Activated T-helper 2 cell treated with anti-CD3 and anti-CD28 coated beads, Interferon-gamma antibody, Interleukin-2, Interleukin-4, amounts not matched to agents 10 μg/mL and 5 μg/mL and 100 μg/mL, durations not matched to agents 14 hours and 24 hours and 36 hours (primary cell): ENCODE measurements at regions of chr10 and their contacts with region 1.

Region 1: DNA sequence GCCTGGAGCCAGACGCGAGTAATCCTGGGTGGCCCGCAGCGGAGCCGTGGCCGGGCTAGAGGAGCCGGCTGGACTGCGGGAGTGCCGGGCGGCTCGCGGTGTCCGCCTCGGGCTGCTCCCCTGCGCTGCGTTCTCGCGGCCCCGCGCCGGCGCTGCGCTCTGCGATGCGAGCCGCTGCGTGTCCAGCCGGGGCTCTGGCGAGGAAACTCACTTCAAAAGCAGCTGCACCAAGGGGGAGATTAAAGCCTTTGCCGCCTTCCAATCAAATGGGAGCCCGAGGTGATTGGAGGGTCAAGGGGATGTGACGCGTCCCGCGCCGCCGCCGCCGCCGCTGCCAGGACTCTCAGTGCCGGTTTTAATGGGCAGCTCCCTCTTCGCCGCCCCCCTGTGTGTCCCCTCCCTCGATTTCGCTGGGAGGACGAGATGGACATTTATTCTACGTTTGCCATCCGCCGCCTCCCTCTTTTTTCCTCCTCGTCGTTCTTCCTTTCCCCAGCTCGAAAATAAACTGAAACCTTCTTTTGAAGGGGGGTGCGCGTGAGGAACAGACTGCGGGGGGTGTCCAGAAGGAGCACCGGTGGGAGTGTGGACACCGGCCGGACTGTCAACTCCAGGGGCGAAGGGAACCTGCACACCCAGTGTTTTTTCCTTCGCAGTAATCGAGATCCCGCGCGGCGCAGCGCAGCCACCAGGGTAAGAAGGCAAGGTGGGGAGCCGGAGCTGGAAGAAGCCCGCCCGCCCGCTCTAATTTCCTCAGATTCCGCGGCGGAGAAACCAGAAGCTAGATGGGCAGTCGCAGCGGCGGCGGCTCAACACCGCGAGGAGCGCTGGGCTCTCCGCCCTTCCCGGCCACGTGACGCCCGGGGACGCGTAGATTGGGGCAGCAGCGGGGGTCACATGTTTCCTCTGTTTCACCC is at the start of gene ZNF503:
- DNase-seq: no peak
- H3K4me3 Mint-ChIP-seq: peak within 1 kb of the TSS; percentile 78
- H3K27ac Mint-ChIP-seq: no peak within 1 kb of the TSS
- H3K4me1 Mint-ChIP-seq: peaks cover 16% of the 10 kb centered on the region
- H3K27me3 Mint-ChIP-seq: peaks cover 60% of the 10 kb centered on the region
- total RNA-seq, gene ZNF503: 0.30 and 0.34 TPM in 2 replicates

Region 2: DNA sequence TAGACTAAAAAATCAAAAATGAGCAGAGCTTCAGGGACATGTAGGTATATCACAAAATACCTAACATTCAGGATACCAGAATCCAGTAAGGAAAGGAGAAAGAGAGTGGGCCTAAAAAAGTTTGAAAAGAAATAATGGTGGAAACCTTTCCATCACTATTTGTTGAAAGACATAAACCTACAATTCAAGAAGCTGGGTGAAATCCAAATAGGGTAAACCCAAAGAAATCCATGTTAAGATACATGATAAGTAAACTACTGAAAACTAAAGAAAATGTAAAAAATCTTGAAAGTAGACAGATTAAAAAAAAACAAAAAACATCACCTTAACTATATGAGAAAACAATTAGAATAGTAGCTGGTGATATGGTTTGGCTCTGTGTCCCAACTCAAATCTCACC is 89.4 kb before region 1 on chr10:
- intact Hi-C with region 1: no loop called
- DNase-seq: no peak
- H3K4me3 Mint-ChIP-seq: no peak overlapping the region
- H3K27ac Mint-ChIP-seq: no peak overlapping the region
- H3K4me1 Mint-ChIP-seq: no peaks in the 10 kb centered on the region
- H3K27me3 Mint-ChIP-seq: peaks cover 2% of the 10 kb centered on the region

Region 3: GRCh38 chr10:76036111-76036940 is 634.5 kb after region 1 on chr10:
- intact Hi-C with region 1: loop called (anchors 5 kb)
- DNase-seq: peak; percentile 23
- H3K4me3 Mint-ChIP-seq: no peak overlapping the region
- H3K27ac Mint-ChIP-seq: no peak overlapping the region
- H3K4me1 Mint-ChIP-seq: no peaks in the 10 kb centered on the region
- H3K27me3 Mint-ChIP-seq: no peaks in the 10 kb centered on the region